ENCODE measurements at regions of chr6 and their contacts with region 1.

Region 1: DNA sequence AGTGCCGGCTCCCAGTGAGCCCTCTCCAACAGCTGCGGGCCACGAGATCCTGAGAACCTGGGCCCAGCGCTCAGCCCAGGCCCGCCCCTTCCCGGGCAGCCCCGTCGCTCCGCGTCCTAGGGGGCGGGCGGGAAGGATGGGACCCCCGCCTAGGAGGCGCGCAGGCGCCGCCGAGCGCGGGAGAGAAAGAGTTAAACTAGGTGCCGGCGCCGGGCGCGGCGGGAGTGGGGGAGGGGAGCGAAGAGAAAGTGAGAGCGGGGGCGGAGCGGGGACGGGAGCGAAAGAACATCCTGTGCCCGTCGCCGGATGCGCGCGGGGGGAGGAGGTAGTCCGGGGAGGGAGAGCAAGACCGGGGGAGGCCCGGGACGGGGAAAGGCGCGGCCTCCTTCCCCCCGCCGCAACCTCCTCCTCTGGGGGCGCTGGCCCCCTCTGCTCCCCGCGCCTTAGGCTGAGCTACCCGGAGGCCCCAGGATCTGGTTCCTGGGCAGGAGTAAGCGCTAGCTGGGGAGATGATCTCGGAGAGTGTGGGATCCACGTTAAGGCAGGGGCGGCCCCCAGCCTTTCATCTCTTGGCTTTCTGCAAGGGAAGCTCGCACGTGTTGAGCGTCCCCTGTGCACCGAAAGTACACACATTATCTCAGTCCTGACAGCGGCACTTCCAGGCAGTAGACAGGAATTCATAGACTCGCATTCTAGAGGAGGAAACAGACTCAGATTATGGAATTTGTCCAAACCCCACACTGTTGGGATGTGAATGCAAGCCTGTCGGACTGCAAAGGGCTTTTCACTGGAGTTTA is 4.9 kb upstream of the ARMC12 start:
- DNase-seq: peak; percentile 85 to 96 (median 93)
- ATAC-seq: peak; percentile 62 to 68 (median 65)
- H3K4me3 ChIP-seq: peak overlapping the region; percentile 72 to 93
- H3K4me3 Mint-ChIP-seq: peak overlapping the region; percentile 74 to 84 (median 83)
- H3K27ac ChIP-seq: peak overlapping the region; percentile 96
- H3K27ac Mint-ChIP-seq: peak overlapping the region; percentile 89
- H3K4me1 ChIP-seq: peaks cover 49 to 92% of the 10 kb centered on the region in 2 experiments
- H3K4me1 Mint-ChIP-seq: peaks cover 76 to 87% (median 80%) of the 10 kb centered on the region in 3 donors
- H3K27me3 ChIP-seq: no peaks in the 10 kb centered on the region
- H3K27me3 Mint-ChIP-seq: no peaks in the 10 kb centered on the region

Region 2: GRCh38 chr6:35583893-35584688 is 147.8 kb before region 1 on chr6:
- CTCF ChIA-PET with region 1: interaction called, 3 to 51 read pairs
- POLR2A ChIA-PET with region 1: no interaction called
- DNase-seq: peak; percentile 46 to 88 (median 69)
- ATAC-seq: peak; percentile 67 to 77 (median 74)
- H3K4me3 ChIP-seq: no peak overlapping the region
- H3K4me3 Mint-ChIP-seq: peak overlapping the region in 1 of 3 donors; percentile 39
- H3K27ac ChIP-seq: peak overlapping the region; percentile 32
- H3K27ac Mint-ChIP-seq: peak overlapping the region; percentile 86 to 87
- H3K4me1 ChIP-seq: peaks cover 17 to 36% of the 10 kb centered on the region in 2 experiments
- H3K4me1 Mint-ChIP-seq: peaks cover 59 to 62% (median 61%) of the 10 kb centered on the region in 3 donors
- H3K27me3 ChIP-seq: no peaks in the 10 kb centered on the region
- H3K27me3 Mint-ChIP-seq: no peaks in the 10 kb centered on the region

Region 3: DNA sequence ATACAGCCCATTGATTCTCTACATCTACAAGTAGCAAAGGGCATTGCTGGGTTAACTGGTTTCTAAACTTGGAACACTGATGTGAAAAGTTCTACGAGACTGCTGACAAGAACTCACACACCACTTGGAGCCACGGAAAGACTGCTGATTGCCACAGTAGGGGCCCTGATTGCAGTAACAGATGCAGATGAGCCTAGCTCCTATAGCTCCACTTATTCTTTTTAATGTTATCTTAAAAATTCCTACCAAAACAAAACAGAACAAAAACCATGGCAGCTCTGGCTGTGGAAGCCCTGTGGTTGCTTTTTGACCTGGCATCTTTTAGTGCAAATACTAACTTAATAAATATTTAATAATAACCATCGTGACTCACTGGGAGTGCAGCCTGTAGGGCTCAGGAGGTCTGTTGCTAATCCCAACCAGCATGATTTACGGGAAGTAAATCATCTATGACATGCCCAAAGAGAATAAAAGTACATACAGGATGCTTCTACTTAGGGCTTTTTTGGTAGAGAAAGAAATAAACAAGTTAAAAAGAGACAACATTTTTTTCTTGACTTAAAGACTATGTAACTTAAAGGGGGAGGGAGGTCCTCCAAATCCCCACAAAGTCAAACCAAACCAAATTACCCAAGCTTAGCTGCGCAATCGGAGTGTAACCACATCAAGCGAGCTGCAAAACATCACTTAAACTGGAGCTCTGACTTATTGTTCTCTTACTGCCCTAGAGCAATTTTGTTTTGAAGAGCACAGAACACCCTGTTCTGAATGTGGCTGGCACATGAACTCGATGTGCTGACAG is 130.4 kb before region 1 on chr6:
- CTCF ChIA-PET with region 1: interaction called, 3 to 18 read pairs
- POLR2A ChIA-PET with region 1: interaction called, 3 read pairs
- DNase-seq: peak; percentile 42 to 95 (median 74)
- ATAC-seq: peak; percentile 85 to 92 (median 88)
- H3K4me3 ChIP-seq: peak overlapping the region; percentile 43 to 46
- H3K4me3 Mint-ChIP-seq: peak overlapping the region; percentile 75 to 80 (median 75)
- H3K27ac ChIP-seq: peak overlapping the region; percentile 83
- H3K27ac Mint-ChIP-seq: peak overlapping the region; percentile 93 to 96
- H3K4me1 ChIP-seq: peaks cover 58 to 61% of the 10 kb centered on the region in 2 experiments
- H3K4me1 Mint-ChIP-seq: peaks cover 79 to 91% (median 84%) of the 10 kb centered on the region in 3 donors
- H3K27me3 ChIP-seq: no peaks in the 10 kb centered on the region
- H3K27me3 Mint-ChIP-seq: no peaks in the 10 kb centered on the region

Region 4: GRCh38 chr6:35642471-35643161 is 89.3 kb before region 1 on chr6:
- CTCF ChIA-PET with region 1: interaction called, 3 to 23 read pairs
- POLR2A ChIA-PET with region 1: no interaction called
- DNase-seq: peak in 12 of 35 experiments; percentile 5 to 43 (median 21)
- ATAC-seq: peak in 1 of 4 experiments; percentile 86
- H3K4me3 ChIP-seq: no peak overlapping the region
- H3K4me3 Mint-ChIP-seq: peak overlapping the region in 1 of 3 donors; percentile 23
- H3K27ac ChIP-seq: no peak overlapping the region
- H3K27ac Mint-ChIP-seq: peak overlapping the region; percentile 62 to 87
- H3K4me1 ChIP-seq: peaks cover 3 to 4% of the 10 kb centered on the region in 2 experiments
- H3K4me1 Mint-ChIP-seq: peaks cover 75 to 79% (median 76%) of the 10 kb centered on the region in 3 donors
- H3K27me3 ChIP-seq: no peaks in the 10 kb centered on the region
- H3K27me3 Mint-ChIP-seq: no peaks in the 10 kb centered on the region

Region 5: GRCh38 chr6:35669451-35670045 is 62.4 kb before region 1 on chr6:
- CTCF ChIA-PET with region 1: interaction called, 3 to 20 read pairs
- POLR2A ChIA-PET with region 1: interaction called, 4 to 5 read pairs
- DNase-seq: peak in 1 of 35 experiments; percentile 57
- ATAC-seq: peak; percentile 53 to 73 (median 70)
- H3K4me3 ChIP-seq: no peak overlapping the region
- H3K4me3 Mint-ChIP-seq: peak overlapping the region; percentile 66 to 73 (median 71)
- H3K27ac ChIP-seq: peak overlapping the region; percentile 77
- H3K27ac Mint-ChIP-seq: peak overlapping the region; percentile 96
- H3K4me1 ChIP-seq: peaks cover 45 to 52% of the 10 kb centered on the region in 2 experiments
- H3K4me1 Mint-ChIP-seq: peaks cover 46 to 68% (median 59%) of the 10 kb centered on the region in 3 donors
- H3K27me3 ChIP-seq: no peaks in the 10 kb centered on the region
- H3K27me3 Mint-ChIP-seq: no peaks in the 10 kb centered on the region

Region 6: GRCh38 chr6:35687658-35688580 is 44.0 kb before region 1 on chr6:
- CTCF ChIA-PET with region 1: interaction called, 5 to 21 read pairs
- POLR2A ChIA-PET with region 1: interaction called, 3 to 4 read pairs
- DNase-seq: peak in 31 of 35 experiments; percentile 17 to 69 (median 40)
- ATAC-seq: peak; percentile 37 to 60 (median 48)
- H3K4me3 ChIP-seq: peak overlapping the region; percentile 74 to 88
- H3K4me3 Mint-ChIP-seq: peak overlapping the region; percentile 90 to 96 (median 94)
- H3K27ac ChIP-seq: peak overlapping the region; percentile 51
- H3K27ac Mint-ChIP-seq: peak overlapping the region; percentile 94 to 97
- H3K4me1 ChIP-seq: peaks cover 7 to 24% of the 10 kb centered on the region in 2 experiments
- H3K4me1 Mint-ChIP-seq: peaks cover 9 to 22% (median 21%) of the 10 kb centered on the region in 3 donors
- H3K27me3 ChIP-seq: no peaks in the 10 kb centered on the region
- H3K27me3 Mint-ChIP-seq: no peaks in the 10 kb centered on the region

Measured in T-cell (primary cell).